ENCODE measurements at regions of chr9 and their contacts with region 1.

Region 1: DNA sequence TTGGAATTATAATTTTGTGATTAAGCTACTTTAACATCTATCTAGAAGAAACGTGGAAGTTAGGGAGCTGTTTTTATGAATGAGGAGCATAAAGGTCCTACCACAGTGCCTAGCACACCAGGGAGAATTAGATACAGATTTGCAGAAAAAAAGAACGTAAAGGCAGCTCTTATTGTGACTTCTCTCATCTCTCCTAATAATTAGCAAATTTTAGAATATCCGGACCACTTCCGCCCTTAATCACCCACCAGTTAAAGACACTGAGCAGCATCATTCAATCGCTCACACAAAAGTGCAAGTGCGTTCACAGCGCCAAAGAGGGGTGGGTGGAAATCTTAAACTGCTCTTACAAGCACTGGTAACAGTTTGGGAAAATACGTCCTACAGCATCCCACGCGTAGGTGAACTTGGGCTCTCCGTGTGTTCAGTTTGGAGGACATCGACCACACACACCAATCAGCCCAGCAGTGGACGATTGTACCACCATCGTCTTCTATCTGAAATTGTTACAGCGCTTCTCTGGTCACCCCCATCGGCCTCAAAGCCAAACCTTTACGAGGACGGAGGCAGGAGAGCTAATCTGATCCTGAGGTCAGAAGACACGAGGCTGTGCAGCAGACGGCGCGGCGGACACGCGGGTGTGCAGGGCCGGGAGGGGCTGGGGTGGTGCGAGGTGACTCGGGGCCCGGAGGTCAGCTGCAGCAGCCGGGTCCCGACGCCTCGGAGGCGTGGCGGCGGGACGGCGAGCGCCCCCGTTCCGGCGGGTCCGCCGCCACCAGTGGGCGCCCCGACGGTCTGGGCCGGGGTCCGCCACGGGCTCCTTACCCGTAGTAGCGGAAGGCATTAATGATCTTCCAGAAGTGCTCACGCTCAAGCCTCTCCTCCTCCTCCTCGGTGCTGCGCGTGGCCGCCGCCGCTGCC is 646 bp downstream of the CARNMT1 start:
- DNase-seq: peak; percentile 53
- H3K4me3 ChIP-seq: peak overlapping the region; percentile 15 to 68 (median 61)
- H3K27ac ChIP-seq: peak overlapping the region; percentile 43
- H3K4me1 ChIP-seq: peaks cover 9% of the 10 kb centered on the region
- H3K27me3 ChIP-seq: peaks cover 1 to 2% of the 10 kb centered on the region in 2 experiments
- CTCF ChIP-seq: peak in 1 of 2 donors; percentile 21
- POLR2A ChIP-seq: peak; percentile 10

Region 2: DNA sequence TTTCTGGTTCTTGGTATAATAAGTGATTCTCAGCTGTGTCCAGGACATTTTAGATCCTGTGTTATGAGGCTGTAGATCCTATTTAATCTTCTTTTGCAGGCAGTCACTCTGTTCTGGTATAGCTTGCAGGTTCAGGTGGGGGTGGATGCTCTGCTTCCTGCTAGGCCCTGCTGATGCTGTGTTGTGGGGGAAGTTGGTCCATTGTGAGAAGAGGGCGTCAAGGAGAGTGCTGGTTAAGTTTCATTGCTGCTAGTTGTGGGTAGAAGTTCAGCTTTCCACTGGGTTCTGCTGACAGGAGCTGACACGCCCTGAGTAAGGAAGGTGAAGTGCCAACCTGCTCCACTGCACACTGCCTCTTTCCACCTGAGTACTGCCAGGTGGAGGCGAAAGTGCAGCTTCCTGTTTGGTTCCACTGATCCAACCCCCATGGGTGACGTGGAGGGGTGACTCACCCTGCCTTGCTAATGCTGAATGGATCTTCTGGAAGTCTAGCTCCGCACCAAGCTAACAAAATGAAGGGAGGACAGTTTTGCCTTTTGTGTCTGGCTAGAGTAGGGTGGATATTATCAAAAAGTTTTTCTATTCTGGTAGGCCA is 44.2 kb after region 1 on chr9:
- CTCF ChIA-PET with region 1: interaction called, 3 read pairs
- POLR2A ChIA-PET with region 1: no interaction called
- dilution Hi-C with region 1: no loop called
- intact Hi-C with region 1: loop called (anchors 2 kb)
- DNase-seq: no peak
- H3K4me3 ChIP-seq: no peak overlapping the region
- H3K27ac ChIP-seq: no peak overlapping the region
- H3K4me1 ChIP-seq: no peaks in the 10 kb centered on the region
- H3K27me3 ChIP-seq: no peaks in the 10 kb centered on the region
- CTCF ChIP-seq: no peak
- POLR2A ChIP-seq: no peak

Region 3: DNA sequence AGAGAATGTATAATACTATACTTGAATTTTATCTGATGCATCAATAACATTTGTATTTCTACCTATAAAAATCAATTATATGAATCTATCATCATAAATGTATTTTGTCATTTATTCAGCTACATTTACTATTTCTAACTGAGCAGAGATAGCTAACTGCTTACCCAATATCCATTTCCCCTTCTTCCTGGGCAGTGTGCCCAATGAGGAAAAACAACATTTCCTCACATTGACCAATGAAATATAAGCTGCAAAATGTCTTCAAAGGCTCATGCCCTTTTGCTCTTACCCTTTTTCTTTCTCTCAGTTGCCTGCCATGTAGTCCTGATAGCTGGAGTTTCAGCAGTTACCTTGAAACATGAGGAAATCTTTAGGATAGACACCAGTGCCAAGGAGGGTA is 477.3 kb after region 1 on chr9:
- CTCF ChIA-PET with region 1: no interaction called
- POLR2A ChIA-PET with region 1: no interaction called
- dilution Hi-C with region 1: no loop called
- intact Hi-C with region 1: no loop called
- DNase-seq: peak; percentile 7
- H3K4me3 ChIP-seq: no peak overlapping the region
- H3K27ac ChIP-seq: no peak overlapping the region
- H3K4me1 ChIP-seq: no peaks in the 10 kb centered on the region
- H3K27me3 ChIP-seq: no peaks in the 10 kb centered on the region
- CTCF ChIP-seq: no peak
- POLR2A ChIP-seq: no peak